Right ventricle myocardium inferior (tissue), 1 donor: ENCODE measurements at regions of chr10 and their contacts with region 1.

Region 1: DNA sequence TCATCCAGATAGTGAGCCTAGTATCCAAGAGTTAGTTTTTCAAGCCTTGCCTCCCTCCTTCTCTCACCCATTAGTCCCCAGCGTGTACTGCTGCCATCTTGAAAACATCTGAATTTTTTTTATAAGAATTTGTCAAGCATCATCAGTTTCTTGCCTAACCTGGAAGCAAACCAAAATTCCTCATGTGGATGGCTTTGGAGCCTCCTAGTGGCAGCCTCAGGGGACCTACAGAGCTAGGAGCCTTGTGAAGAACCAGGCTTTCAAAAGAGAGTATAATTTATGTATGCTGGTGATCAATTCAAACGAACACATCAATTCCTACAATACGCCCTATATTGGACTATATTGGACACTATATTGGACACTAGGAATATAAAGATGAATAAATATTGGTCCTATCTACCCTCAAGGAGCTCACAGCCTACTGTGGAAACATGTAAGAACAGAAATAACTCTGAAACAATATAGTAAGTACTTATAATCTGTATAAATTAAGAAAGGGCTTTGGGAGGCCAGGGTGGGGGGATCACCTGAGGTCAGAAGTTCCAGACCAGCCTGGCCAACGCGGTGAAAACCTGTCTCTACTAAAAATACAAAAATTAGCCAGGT is 63.4 kb downstream of the HPSE2 start:
- DNase-seq: no peak
- ATAC-seq: no peak

Region 2: GRCh38 chr10:98242823-98243222 is 929.4 kb before region 1 on chr10:
- intact Hi-C with region 1: loop called (anchors 5 kb)
- DNase-seq: no peak
- ATAC-seq: no peak

Region 3: DNA sequence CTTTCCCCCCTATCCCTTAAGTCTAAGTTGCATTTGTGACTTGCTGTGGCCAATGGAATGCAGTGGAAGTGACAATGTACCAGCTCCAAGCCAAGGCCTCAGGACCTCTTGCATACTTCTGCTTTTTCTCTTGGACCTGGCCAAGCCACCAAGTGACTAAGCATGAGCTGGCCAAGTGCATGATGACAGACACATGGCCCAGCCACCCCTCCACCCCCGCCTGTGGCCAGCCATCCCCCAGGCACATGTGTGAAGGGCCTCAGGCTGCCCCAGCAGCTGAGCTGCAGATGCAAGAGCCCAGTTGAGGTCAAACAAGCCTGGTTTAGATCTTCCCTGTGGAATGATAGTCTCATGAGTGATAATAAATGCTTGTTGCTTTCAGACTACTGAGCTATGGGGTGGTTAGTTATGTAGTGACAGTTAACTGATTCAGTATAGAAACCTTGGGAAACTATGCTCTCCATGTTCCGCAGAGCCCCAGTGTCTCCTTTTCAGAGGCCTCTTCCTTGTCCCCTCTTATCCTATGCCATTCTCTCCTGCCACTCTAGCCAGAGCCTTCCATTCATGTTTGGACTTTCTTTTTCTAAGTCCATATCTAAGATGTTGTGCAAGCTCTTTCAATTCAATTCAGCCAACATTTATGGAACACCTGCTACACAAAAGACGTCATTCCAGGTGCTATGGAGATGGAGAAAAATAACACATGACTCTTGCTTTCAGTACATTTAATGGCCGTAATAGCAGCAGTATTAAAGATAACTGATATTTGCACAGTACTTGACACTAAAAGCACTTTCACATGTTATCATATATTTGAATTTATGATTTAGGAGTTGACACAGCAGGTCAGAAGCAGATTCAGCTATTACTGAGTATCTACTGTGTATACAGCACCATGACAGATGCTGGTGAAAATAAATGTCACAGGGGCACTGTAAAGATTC is 848.7 kb before region 1 on chr10:
- intact Hi-C with region 1: loop called (anchors 10 kb)
- DNase-seq: peak; percentile 90
- ATAC-seq: peak; percentile 93

Region 4: GRCh38 chr10:98994030-98994429 is 178.2 kb before region 1 on chr10:
- intact Hi-C with region 1: no loop called
- DNase-seq: no peak
- ATAC-seq: no peak